Activated T-helper 1 cell treated with anti-CD3 and anti-CD28 coated beads, Interleukin-12 subunit alpha, Interleukin-12 subunit beta, Interleukin-2, Interleukin-4 antibody, amounts not matched to agents 30 ng/mL and 10 ng/mL and 1 ng/mL, durations not matched to agents 14 hours and 24 hours and 36 hours (primary cell): ENCODE measurements at regions of chr19 and their contacts with region 1.

Region 1: GRCh38 chr19:33778089-33778791 is 18.4 kb upstream of the KCTD15 start:
- DNase-seq: peak; percentile 76
- H3K4me3 Mint-ChIP-seq: no peak overlapping the region
- H3K27ac Mint-ChIP-seq: no peak overlapping the region
- H3K4me1 Mint-ChIP-seq: peaks cover 5% of the 10 kb centered on the region
- H3K27me3 Mint-ChIP-seq: peaks cover 2% of the 10 kb centered on the region

Region 2: DNA sequence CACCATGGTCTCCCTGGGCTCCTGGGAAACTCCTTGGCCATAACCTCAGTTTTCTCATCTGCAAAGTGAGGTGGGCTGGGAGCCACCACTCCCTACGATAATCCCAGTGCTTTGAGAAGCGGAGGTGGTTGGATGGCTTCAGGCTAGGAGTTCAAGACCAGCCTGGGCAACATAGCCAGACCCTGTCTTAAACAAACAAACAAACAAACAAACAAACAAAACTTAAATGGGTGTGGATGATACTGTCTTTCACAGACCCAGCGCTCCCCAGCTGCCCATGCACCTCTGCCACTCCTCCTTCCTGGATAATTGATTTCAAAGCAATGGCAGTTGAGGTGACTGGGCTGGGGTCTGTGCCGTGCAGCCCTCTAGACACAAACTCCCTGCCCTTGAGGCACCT is 197.1 kb before region 1 on chr19:
- intact Hi-C with region 1: no loop called
- DNase-seq: no peak
- H3K4me3 Mint-ChIP-seq: no peak overlapping the region
- H3K27ac Mint-ChIP-seq: no peak overlapping the region
- H3K4me1 Mint-ChIP-seq: no peaks in the 10 kb centered on the region
- H3K27me3 Mint-ChIP-seq: peaks cover 1% of the 10 kb centered on the region

Region 3: GRCh38 chr19:33819880-33820781 is 41.9 kb after region 1 on chr19:
- intact Hi-C with region 1: loop called (anchors 5 kb)
- DNase-seq: peak; percentile 62
- H3K4me3 Mint-ChIP-seq: peak overlapping the region; percentile 80
- H3K27ac Mint-ChIP-seq: peak overlapping the region; percentile 79
- H3K4me1 Mint-ChIP-seq: peaks cover 20% of the 10 kb centered on the region
- H3K27me3 Mint-ChIP-seq: peaks cover 4% of the 10 kb centered on the region

Region 4: DNA sequence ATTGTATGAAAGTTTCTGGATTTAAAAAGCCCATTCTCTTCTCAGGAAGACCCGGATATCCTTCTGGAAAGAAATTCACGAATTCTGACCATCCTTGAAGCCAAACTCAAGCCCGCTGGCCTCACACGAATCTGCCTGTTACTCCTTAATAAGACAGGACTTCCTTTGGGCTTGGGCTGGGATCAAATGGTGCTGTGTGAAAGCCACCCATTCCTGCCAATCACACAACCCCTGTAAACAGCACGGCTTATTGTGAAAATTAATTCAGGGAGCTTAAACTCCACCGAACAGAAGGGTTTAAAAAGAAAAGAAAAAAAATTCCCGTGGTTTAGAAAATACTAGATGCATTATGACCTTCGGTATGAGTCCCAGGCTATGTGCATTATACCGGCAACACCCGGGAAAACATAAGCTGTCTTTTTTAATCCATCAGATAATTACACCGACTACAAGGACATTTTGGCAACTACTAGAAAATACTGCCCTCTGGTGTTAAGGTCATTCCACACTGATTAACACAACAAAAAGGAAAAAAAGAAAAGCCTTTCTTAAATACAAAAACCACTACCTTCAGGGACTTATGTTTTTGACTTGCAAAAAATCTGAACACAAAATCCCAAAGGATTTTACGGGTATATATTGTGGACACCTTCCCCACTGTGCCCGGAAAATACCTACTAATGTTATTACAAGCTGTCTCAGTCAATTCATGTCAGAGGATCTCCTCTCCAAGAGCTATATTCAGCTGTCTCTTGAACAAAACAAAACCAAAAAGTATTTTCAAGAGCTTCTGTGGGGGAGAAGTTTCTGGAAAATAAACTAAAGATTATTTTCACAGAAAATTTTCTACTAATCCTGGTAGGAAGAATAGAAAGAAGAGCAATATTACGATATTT is 318.0 kb after region 1 on chr19:
- intact Hi-C with region 1: loop called (anchors 1 kb)
- DNase-seq: no peak
- H3K4me3 Mint-ChIP-seq: no peak overlapping the region
- H3K27ac Mint-ChIP-seq: no peak overlapping the region
- H3K4me1 Mint-ChIP-seq: peaks cover 6% of the 10 kb centered on the region
- H3K27me3 Mint-ChIP-seq: peaks cover 12% of the 10 kb centered on the region

Region 5: DNA sequence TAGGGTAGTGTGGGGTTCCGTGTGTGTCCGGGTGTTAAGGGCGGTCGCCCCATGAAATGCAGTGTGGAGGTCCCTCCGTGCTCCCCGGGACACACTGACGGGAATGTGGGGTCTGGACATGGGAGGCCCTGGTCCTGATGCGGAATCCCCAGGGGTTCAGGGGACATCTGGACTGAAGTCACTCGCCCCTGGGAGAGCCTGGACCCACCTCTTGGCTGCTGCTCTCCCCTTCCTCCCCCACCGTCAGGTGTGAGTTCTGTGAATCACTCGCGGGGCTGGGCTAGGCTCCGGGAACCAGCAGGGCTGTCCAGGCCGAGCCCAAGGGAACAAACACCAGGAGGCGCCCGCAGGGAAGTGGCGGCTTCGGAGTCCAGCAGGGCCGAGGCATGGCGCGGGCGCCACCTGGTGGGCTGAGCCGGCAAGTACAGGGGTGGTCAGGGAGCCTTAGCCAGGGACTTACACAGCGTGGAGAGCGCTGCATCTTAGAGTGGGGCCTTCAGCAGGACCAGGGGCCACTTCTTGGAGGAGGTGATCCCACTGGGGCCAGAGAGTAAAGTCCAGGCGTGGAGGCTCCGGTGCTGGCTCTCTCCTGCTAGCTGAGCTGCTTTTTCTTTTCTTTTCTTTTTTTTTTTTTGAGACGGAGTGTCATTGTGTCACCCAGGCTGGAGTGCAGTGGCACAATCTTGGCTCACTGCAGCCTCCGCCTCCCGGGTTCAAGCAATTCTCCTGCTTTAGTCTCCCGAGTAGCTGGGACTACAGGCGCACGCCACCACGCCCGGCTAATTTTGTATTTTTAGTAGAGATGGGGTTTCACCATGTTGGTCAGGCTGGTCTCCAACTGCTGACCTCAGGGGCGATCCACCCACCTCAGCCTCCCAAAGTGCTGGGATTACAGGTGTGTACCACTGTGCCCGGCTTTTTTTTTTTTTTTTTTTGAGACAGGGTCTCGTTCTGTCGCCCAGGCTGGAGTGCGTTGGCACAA is 723.4 kb after region 1 on chr19:
- intact Hi-C with region 1: loop called (anchors 10 kb)
- DNase-seq: peak; percentile 78
- H3K4me3 Mint-ChIP-seq: no peak overlapping the region
- H3K27ac Mint-ChIP-seq: no peak overlapping the region
- H3K4me1 Mint-ChIP-seq: no peaks in the 10 kb centered on the region
- H3K27me3 Mint-ChIP-seq: peaks cover 4% of the 10 kb centered on the region